Activated naive CD4-positive, alpha-beta T cell treated with anti-CD3 and anti-CD28 coated beads for 36 hours (primary cell): ENCODE measurements at regions of chr5 and their contacts with region 1.

Region 1: GRCh38 chr5:132410451-132411381 is 41.2 kb downstream of the SLC22A5 start:
- DNase-seq: peak; percentile 87
- H3K4me3 Mint-ChIP-seq: peak overlapping the region; percentile 90
- H3K27ac Mint-ChIP-seq: peak overlapping the region; percentile 99
- H3K4me1 Mint-ChIP-seq: peaks cover 68% of the 10 kb centered on the region
- H3K27me3 Mint-ChIP-seq: no peaks in the 10 kb centered on the region

Region 2: DNA sequence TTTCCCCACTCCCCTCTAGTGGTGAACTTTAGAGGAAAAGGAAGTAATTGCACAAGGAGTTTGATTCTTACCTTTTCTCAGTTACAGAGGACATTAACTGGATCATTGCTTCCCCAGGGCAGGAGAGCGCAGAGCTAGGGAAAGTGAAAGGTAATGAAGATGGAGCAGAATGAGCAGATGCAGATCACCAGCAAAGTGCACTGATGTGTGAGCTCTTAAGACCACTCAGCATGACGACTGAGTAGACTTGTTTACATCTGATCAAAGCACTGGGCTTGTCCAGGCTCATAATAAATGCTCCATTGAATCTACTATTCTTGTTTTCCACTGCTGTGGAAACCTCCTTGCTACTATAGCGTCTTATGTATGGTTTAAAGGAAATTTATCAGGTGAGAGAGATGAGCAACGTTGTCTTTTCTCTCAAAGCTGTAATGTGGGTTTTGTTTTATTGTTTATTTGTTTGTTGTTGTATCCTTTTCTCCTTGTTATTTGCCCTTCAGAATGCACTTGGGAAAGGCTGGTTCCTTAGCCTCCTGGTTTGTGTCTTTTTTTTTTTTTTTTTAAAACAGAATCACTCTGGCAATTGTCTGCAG is 16.0 kb before region 1 on chr5:
- CTCF ChIA-PET with region 1: interaction called, 5 read pairs
- intact Hi-C with region 1: loop called (anchors 1 kb)
- DNase-seq: no peak
- H3K4me3 Mint-ChIP-seq: no peak overlapping the region
- H3K27ac Mint-ChIP-seq: no peak overlapping the region
- H3K4me1 Mint-ChIP-seq: peaks cover 64% of the 10 kb centered on the region
- H3K27me3 Mint-ChIP-seq: no peaks in the 10 kb centered on the region

Region 3: GRCh38 chr5:132490486-132491367 is 80.0 kb after region 1 on chr5 and contains the start of gene IRF1:
- CTCF ChIA-PET with region 1: interaction called, 73 read pairs
- intact Hi-C with region 1: loop called (anchors 1 kb)
- DNase-seq: peak; percentile 98
- H3K4me3 Mint-ChIP-seq: peak within 1 kb of the TSS; percentile 91
- H3K27ac Mint-ChIP-seq: peak within 1 kb of the TSS; percentile 97
- H3K4me1 Mint-ChIP-seq: peaks cover 64% of the 10 kb centered on the region
- H3K27me3 Mint-ChIP-seq: no peaks in the 10 kb centered on the region
- total RNA-seq, gene IRF1: 84.3 to 88.4 TPM

Region 4: DNA sequence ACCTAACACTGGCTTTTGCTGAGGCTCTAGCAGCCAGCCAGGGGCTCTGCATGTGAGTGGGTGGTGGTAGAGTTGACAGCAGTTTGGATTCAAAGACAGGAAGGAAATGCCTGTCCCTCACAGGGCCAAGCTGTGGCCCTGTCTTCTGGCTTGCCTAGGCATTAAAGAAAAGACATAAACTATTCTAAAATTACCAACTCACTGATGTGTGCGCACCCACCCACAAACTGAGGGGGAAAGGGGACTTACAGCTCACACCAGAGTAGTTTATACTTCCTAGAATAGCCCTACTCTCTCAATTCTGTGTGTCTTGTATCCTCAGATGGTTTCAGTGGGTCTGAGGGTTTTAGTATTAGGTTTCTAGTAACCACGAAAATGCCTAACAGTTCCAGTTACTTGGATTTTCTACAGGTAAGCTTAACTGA is 229.0 kb after region 1 on chr5:
- CTCF ChIA-PET with region 1: no interaction called
- intact Hi-C with region 1: loop called (anchors 10 kb)
- DNase-seq: no peak
- H3K4me3 Mint-ChIP-seq: no peak overlapping the region
- H3K27ac Mint-ChIP-seq: no peak overlapping the region
- H3K4me1 Mint-ChIP-seq: peaks cover 43% of the 10 kb centered on the region
- H3K27me3 Mint-ChIP-seq: no peaks in the 10 kb centered on the region

Region 5: DNA sequence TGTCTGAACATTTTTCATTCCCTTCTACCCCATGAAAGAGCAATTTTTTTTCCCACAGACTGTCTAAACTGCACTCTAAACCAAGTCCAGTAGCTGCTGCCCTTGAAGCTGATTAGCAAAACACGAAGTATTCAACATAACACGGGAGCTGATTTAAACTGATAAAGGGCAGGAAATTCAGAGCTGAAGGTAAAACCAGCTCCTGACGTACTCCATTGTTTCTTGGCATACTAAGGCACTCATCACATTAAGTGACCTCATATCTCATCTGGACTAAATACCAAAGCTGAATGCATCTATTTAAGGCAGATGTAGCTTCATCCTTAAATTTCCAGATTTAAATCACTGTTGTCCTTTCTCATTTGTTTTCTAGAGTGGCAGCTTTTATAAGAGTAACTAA is 443.6 kb after region 1 on chr5:
- CTCF ChIA-PET with region 1: no interaction called
- intact Hi-C with region 1: no loop called
- DNase-seq: no peak
- H3K4me3 Mint-ChIP-seq: no peak overlapping the region
- H3K27ac Mint-ChIP-seq: no peak overlapping the region
- H3K4me1 Mint-ChIP-seq: peaks cover 2% of the 10 kb centered on the region
- H3K27me3 Mint-ChIP-seq: peaks cover 3% of the 10 kb centered on the region